PC-9 (cell line): ENCODE measurements at regions of chr21 and their contacts with region 1.

Region 1: DNA sequence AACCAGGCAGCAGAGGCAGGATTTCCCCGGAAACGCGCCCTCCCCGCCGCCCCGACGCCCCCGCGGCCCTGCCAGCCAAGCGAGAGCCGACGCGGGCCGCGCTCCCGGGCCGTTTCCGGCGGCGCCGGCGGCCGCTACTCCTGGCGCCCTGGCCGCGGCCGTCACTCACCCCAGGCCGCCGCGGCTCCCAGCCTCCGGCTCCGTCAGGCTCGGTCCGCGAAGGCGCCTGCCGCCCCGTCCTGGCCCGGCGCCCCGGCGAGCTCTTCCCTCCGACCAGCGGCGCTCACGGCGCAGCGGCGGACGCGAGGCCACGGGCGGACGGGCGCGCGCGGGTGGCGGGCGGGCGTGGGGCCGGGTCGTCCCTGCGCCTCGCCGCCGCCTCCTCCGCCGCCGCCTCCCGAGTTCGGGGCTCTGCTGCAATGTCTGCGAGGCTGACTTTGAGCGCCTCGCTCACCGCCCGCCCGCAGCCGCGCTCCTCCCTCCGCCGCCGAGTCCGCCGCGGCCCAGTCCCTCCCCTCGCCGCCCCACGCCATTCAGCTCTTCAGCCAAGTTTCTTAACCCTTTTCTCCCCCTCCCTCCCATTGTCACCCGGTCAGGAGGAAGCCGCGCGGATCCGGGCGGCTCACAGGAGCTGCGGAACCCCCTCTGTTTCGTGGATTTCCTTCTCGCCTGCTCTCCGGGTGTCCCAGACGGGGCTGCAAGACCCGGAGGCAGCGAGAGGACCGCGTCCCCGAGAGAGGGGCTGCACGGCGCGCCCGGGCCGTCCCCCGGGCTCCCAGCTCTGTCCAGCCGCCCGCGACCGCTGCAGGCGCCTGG is at the start of gene NRIP1:
- DNase-seq: peak; percentile 65 to 84
- H3K4me3 ChIP-seq: peak within 1 kb of the TSS; percentile 86
- H3K27ac ChIP-seq: peak within 1 kb of the TSS; percentile 74
- H3K4me1 ChIP-seq: peaks cover 41% of the 10 kb centered on the region
- H3K27me3 ChIP-seq: no peaks in the 10 kb centered on the region
- CTCF ChIP-seq: no peak
- total RNA-seq, gene NRIP1: 25.2 and 33.0 TPM in 2 replicates

Region 2: GRCh38 chr21:14877570-14878228 is 187.1 kb before region 1 on chr21:
- CTCF ChIA-PET with region 1: no interaction called
- POLR2A ChIA-PET with region 1: no interaction called
- intact Hi-C with region 1: loop called (anchors 5 kb)
- DNase-seq: peak in 1 of 2 experiments; percentile 93
- H3K4me3 ChIP-seq: peak overlapping the region; percentile 19; the same call in 1 of the 2 replicates
- H3K27ac ChIP-seq: peak overlapping the region; percentile 87
- H3K4me1 ChIP-seq: peaks cover 89% of the 10 kb centered on the region
- H3K27me3 ChIP-seq: no peaks in the 10 kb centered on the region
- CTCF ChIP-seq: no peak

Region 3: GRCh38 chr21:14956807-14957206 is 108.0 kb before region 1 on chr21:
- CTCF ChIA-PET with region 1: no interaction called
- POLR2A ChIA-PET with region 1: no interaction called
- intact Hi-C with region 1: loop called (anchors 5 kb)
- DNase-seq: peak; percentile 4 to 66
- H3K4me3 ChIP-seq: no peak overlapping the region
- H3K27ac ChIP-seq: peak overlapping the region; percentile 54
- H3K4me1 ChIP-seq: peaks cover 31% of the 10 kb centered on the region
- H3K27me3 ChIP-seq: no peaks in the 10 kb centered on the region
- CTCF ChIP-seq: no peak

Region 4: DNA sequence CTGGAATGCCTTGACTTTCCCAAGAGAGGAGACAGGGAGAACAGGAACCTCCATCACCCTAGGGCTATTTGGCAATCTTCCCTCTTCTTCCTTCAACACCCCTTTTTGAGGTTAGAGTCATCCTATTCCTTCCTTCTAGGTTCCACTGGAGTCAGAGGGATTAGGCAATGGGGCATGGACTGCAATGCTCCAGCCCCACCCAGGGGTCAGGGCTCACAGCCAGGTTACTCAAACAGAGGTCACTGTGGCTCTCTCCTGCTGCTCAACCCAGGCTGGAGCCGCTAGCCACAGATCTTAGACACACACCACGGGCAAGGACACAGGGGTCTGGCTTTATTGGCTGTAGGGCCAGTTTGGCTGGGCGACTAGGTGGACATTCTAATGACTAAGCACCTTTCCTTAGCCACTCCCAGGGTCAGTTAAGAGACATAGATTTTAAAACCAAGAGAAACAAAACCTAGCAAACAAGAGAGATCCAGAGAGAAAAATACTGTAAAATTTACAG is 145.5 kb after region 1 on chr21:
- CTCF ChIA-PET with region 1: no interaction called
- POLR2A ChIA-PET with region 1: no interaction called
- intact Hi-C with region 1: loop called (anchors 2 kb)
- DNase-seq: peak; percentile 90 to 95
- H3K4me3 ChIP-seq: 0 out of 2 replicates have a peak overlapping the region, but pooled peaks have one; percentile 26
- H3K27ac ChIP-seq: peak overlapping the region; percentile 83
- H3K4me1 ChIP-seq: peaks cover 44% of the 10 kb centered on the region
- H3K27me3 ChIP-seq: no peaks in the 10 kb centered on the region
- CTCF ChIP-seq: no peak

Region 5: GRCh38 chr21:15483138-15483780 is 418.5 kb after region 1 on chr21:
- CTCF ChIA-PET with region 1: no interaction called
- POLR2A ChIA-PET with region 1: no interaction called
- intact Hi-C with region 1: loop called (anchors 1 kb)
- DNase-seq: peak; percentile 55 to 78
- H3K4me3 ChIP-seq: no peak overlapping the region
- H3K27ac ChIP-seq: no peak overlapping the region
- H3K4me1 ChIP-seq: peaks cover 6% of the 10 kb centered on the region; the same call in 1 of the 2 replicates
- H3K27me3 ChIP-seq: no peaks in the 10 kb centered on the region
- CTCF ChIP-seq: peak; percentile 91